ENCODE measurements at regions of chrX and their contacts with region 1.

Region 1: DNA sequence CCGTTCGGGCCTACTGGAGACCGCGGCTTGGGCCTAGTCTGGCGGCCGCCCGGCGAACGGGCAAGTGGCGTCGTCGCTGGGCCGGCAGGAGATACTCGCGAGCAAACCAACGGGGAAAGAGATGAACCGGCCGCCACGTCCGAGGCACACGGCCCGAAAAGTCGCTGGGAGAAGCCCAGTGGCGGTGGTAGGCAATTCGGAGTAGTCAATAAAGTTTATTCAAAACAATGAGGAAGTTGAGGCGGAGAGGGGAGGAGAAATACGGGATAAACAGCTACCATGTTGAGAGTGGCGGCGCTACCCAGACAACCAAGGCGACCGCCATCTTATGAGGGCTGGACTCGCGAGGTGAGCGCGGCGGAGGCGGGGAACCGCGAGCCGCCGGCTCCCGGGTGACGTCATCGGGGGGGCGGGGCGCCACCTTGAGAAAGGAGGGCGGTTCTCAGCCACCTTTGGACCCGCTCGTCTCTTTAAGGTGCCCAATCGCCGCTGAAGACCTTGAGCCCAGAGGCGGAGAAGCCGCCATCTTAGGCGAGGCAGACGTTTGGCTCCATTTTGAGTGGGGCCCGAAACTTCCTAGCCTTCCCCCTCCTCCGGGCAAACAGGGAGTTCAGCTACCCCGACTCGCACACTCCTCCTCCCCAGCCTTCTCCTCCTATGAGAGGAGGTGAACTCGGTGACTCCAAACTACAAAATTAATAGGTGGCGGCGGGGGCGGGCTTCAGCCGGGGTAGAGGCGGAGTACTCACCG is at the start of gene PHF8:
- DNase-seq: peak; percentile 94 to 96 (median 95)
- ATAC-seq: peak; percentile 92 to 95 (median 95)
- H3K4me3 ChIP-seq: peak within 1 kb of the TSS; percentile 48 to 98 (median 79)
- H3K27ac ChIP-seq: peak within 1 kb of the TSS; percentile 88 to 99 (median 96)
- H3K4me1 ChIP-seq: peaks cover 0 to 6% (median 0%) of the 10 kb centered on the region in 12 donors
- H3K27me3 ChIP-seq: no peaks in the 10 kb centered on the region
- CTCF ChIP-seq: no peak
- POLR2A ChIP-seq: no peak
- total RNA-seq, gene PHF8: 8.4 to 13.6 (median 9.7) TPM

Region 2: GRCh38 chrX:53683556-53684414 is 360.5 kb before region 1 on chrX:
- intact Hi-C with region 1: loop called in 2 of 10 experiments (anchors 10 kb)
- DNase-seq: peak; percentile 91 to 94 (median 92)
- ATAC-seq: peak; percentile 86 to 93 (median 92)
- H3K4me3 ChIP-seq: peak overlapping the region; percentile 29 to 96 (median 68)
- H3K27ac ChIP-seq: peak overlapping the region; percentile 73 to 93 (median 88)
- H3K4me1 ChIP-seq: peaks cover 0 to 31% (median 7%) of the 10 kb centered on the region in 12 donors
- H3K27me3 ChIP-seq: no peaks in the 10 kb centered on the region
- CTCF ChIP-seq: peak in 1 of 12 donors; percentile 12
- POLR2A ChIP-seq: peak in 1 of 2 donors; percentile 70

Region 3: DNA sequence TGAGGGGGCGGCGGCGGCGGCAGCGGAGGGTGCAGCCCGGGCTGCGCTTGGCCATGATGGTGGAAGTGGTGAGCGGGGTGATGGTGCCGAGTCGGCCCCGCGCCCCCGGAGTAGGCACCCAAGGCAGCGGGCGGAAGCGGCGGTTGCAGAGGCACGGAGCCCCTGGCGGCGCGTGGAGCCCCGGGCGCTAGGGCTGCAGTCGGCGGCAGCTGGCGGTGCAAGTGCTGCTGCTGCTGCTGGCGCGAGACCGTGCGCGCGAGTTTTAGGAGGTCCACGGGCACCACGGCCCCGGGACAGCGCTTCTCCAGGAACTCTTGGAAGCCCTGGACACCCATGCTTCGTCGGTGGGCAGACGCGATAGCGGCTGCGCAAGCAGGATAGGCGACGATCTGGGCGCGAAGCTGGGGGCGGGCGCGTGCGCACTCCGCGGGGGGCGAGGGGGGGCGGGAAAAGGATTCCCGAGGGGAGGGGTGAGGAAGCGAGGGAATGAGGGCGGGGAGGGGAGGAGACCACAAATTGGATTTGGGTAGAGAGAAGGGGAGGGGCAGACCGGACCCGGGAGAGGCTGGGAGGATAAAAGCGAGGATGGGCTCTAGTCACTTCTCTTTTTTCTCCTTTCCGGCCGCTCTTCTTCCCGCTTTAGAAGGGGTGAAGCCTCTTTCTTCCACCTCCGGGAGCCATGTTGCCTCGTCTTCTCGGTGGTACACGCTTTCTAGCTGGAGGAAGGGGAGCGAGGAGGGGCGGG is 138.7 kb after region 1 on chrX and contains the start of gene FAM120C:
- intact Hi-C with region 1: loop called in 4 of 10 experiments (anchors 2 to 10 kb)
- DNase-seq: peak; percentile 71 to 82 (median 78)
- ATAC-seq: peak; percentile 81 to 94 (median 91)
- H3K4me3 ChIP-seq: peak within 1 kb of the TSS; percentile 64 to 99 (median 82)
- H3K27ac ChIP-seq: peak within 1 kb of the TSS; percentile 78 to 94 (median 87)
- H3K4me1 ChIP-seq: peaks cover 0 to 38% (median 16%) of the 10 kb centered on the region in 12 donors
- H3K27me3 ChIP-seq: peaks cover 0 to 4% (median 0%) of the 10 kb centered on the region in 9 donors
- CTCF ChIP-seq: no peak
- POLR2A ChIP-seq: no peak
- total RNA-seq, gene FAM120C: 3.4 to 8.8 (median 5.9) TPM

Region 4: DNA sequence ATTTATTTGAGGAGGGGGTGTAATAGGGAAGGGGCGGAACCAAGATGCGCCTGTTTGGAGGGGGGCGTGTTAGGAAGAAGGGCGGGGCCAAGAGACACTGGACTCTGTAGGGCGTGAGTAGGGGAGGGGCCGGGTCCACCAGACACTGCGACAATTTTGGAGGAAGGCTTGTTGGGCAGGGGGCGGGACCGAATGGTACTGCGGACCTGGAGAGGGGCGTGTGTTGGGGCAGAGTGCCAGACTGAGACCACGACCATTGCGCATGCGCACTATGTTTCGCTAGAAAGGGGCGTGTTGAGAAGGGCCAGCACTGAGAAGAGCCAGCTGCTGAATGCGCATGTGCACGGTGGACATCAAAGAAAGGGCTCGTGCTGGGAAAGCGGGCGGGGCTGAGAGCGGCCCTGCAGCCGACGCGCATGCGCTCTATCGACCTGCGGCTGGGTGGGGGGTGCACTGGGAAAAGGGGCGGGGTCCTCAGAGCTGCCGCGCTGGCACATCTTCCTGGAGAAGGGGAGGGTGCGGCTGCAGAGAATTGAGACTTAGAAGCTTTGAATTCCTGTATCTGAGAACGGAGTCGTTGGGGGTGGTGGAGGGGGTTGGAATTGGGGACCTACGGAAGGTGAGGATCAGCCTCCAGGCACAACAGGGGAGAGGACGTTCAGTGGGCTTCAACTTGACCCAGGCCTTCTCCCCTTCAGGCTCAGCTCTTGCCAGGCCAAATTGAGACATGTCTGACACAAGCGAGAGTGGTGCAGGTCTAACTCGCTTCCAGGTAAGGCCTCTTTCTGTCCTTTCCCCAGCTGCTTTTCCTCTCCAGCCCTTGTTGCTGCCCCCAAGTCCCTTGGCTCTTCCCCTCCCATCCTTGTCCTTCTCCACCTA is 764.5 kb after region 1 on chrX:
- intact Hi-C with region 1: loop called in 1 of 10 experiments (anchors 5 kb)
- DNase-seq: peak; percentile 92 to 96 (median 94)
- ATAC-seq: peak; percentile 88 to 93 (median 90)
- H3K4me3 ChIP-seq: peak overlapping the region; percentile 46 to 99 (median 71)
- H3K27ac ChIP-seq: peak overlapping the region; percentile 78 to 98 (median 89)
- H3K4me1 ChIP-seq: peaks cover 0 to 18% (median 7%) of the 10 kb centered on the region in 12 donors
- H3K27me3 ChIP-seq: no peaks in the 10 kb centered on the region
- CTCF ChIP-seq: no peak
- POLR2A ChIP-seq: no peak

Region 5: DNA sequence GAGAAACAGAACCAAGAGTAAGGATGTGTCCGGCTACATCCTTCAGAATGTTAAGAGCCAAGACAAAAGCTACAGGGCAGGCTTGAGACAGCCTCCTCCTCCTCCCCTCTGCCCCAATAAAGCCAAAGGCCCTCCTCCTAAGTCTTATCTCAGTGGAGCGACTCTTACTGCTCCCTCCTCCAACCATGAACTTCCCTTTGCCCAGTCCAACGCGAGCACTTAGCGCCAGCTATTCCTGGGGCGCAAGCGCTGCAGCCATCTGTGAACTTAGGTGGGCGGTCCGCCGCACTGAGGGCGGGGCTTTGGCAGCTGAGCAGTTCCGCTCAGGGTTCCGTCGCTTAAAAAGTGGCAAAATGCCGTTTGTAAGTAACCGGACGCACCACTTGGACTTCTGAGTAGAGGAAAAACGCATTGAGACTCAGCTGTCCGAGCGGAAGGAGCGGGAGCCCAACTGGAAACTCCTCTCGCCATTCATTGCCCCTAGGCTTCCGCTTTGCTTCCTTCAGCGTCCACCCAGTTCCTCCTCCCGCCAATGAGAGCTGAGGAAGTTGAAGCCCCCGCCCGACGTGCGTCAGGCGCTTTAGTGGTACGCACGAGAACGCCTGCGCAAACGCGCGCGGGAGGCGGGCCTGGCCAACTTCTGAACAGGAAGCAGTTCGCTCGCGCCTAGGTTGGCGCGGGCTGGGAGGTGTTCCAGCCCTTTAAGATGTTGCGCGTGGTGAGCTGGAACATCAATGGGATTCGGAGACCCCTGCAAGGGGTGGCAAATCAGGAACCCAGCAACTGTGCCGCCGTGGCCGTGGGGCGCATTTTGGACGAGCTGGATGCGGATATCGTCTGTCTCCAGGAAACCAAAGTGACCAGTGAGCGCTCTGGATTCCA is 955.7 kb after region 1 on chrX and contains the start of gene APEX2:
- intact Hi-C with region 1: loop called in 1 of 10 experiments (anchors 10 kb)
- DNase-seq: peak; percentile 89 to 94 (median 94)
- ATAC-seq: peak; percentile 97 to 98 (median 98)
- H3K4me3 ChIP-seq: peak within 1 kb of the TSS; percentile 19 to 95 (median 66)
- H3K27ac ChIP-seq: peak within 1 kb of the TSS; percentile 68 to 95 (median 86)
- H3K4me1 ChIP-seq: peaks cover 0 to 17% (median 4%) of the 10 kb centered on the region in 12 donors
- H3K27me3 ChIP-seq: no peaks in the 10 kb centered on the region
- CTCF ChIP-seq: no peak
- POLR2A ChIP-seq: peak in 1 of 2 donors; percentile 70
- total RNA-seq, gene APEX2: 6.8 to 12.4 (median 8.6) TPM

Measured in heart left ventricle (tissue), 16 donors.